ENCODE measurements at regions of chr2 and their contacts with region 1.

Region 1: GRCh38 chr2:216651351-216651881 is 18.2 kb downstream of the IGFBP2 start:
- DNase-seq: peak; percentile 87
- ATAC-seq: peak; percentile 27
- H3K4me3 ChIP-seq: no peak overlapping the region
- H3K27ac ChIP-seq: peak overlapping the region; percentile 78; the same call in 1 of the 2 replicates
- H3K4me1 ChIP-seq: peaks cover 29% of the 10 kb centered on the region; the same call in 1 of the 2 replicates
- H3K27me3 ChIP-seq: peaks cover 1% of the 10 kb centered on the region; the same call in 1 of the 2 replicates
- CTCF ChIP-seq: no peak
- POLR2A ChIP-seq: no peak
- RAD21 ChIP-seq: no peak

Region 2: GRCh38 chr2:216215658-216216390 is 435.6 kb before region 1 on chr2:
- CTCF ChIA-PET with region 1: no interaction called
- POLR2A ChIA-PET with region 1: no interaction called
- dilution Hi-C with region 1: no loop called
- in situ Hi-C with region 1: no loop called
- intact Hi-C with region 1: no loop called
- DNase-seq: peak; percentile 40
- ATAC-seq: peak; percentile 48; the same call in 1 of the 2 replicates
- H3K4me3 ChIP-seq: no peak overlapping the region
- H3K27ac ChIP-seq: no peak overlapping the region
- H3K4me1 ChIP-seq: peaks cover 23% of the 10 kb centered on the region
- H3K27me3 ChIP-seq: no peaks in the 10 kb centered on the region
- CTCF ChIP-seq: peak; percentile 40
- POLR2A ChIP-seq: no peak
- RAD21 ChIP-seq: peak; percentile 30

Region 3: GRCh38 chr2:216589791-216590190 is 61.6 kb before region 1 on chr2:
- CTCF ChIA-PET with region 1: no interaction called
- POLR2A ChIA-PET with region 1: no interaction called
- dilution Hi-C with region 1: no loop called
- in situ Hi-C with region 1: no loop called
- intact Hi-C with region 1: loop called (anchors 5 kb)
- DNase-seq: no peak
- ATAC-seq: peak; percentile 21; the same call in 1 of the 2 replicates
- H3K4me3 ChIP-seq: no peak overlapping the region
- H3K27ac ChIP-seq: no peak overlapping the region
- H3K4me1 ChIP-seq: peaks cover 3% of the 10 kb centered on the region
- H3K27me3 ChIP-seq: peaks cover 2% of the 10 kb centered on the region; the same call in 1 of the 2 replicates
- CTCF ChIP-seq: no peak
- POLR2A ChIP-seq: no peak
- RAD21 ChIP-seq: no peak

Region 4: GRCh38 chr2:217186668-217187159 is 535.3 kb after region 1 on chr2:
- CTCF ChIA-PET with region 1: no interaction called
- POLR2A ChIA-PET with region 1: no interaction called
- dilution Hi-C with region 1: no loop called
- in situ Hi-C with region 1: no loop called
- intact Hi-C with region 1: no loop called
- DNase-seq: no peak
- ATAC-seq: no peak
- H3K4me3 ChIP-seq: no peak overlapping the region
- H3K27ac ChIP-seq: no peak overlapping the region
- H3K4me1 ChIP-seq: peaks cover 7% of the 10 kb centered on the region
- H3K27me3 ChIP-seq: no peaks in the 10 kb centered on the region
- CTCF ChIP-seq: no peak
- POLR2A ChIP-seq: no peak
- RAD21 ChIP-seq: no peak

Measured in IMR-90 (cell line).